ENCODE measurements at regions of chr7 and their contacts with region 1.

Region 1: GRCh38 chr7:106285051-106285854 is 470 bp upstream of the NAMPT start:
- DNase-seq: peak; percentile 96
- H3K4me3 Mint-ChIP-seq: peak overlapping the region; percentile 95
- H3K27ac Mint-ChIP-seq: peak overlapping the region; percentile 99
- H3K4me1 Mint-ChIP-seq: peaks cover 53% of the 10 kb centered on the region
- H3K27me3 Mint-ChIP-seq: peaks cover 2% of the 10 kb centered on the region

Region 2: DNA sequence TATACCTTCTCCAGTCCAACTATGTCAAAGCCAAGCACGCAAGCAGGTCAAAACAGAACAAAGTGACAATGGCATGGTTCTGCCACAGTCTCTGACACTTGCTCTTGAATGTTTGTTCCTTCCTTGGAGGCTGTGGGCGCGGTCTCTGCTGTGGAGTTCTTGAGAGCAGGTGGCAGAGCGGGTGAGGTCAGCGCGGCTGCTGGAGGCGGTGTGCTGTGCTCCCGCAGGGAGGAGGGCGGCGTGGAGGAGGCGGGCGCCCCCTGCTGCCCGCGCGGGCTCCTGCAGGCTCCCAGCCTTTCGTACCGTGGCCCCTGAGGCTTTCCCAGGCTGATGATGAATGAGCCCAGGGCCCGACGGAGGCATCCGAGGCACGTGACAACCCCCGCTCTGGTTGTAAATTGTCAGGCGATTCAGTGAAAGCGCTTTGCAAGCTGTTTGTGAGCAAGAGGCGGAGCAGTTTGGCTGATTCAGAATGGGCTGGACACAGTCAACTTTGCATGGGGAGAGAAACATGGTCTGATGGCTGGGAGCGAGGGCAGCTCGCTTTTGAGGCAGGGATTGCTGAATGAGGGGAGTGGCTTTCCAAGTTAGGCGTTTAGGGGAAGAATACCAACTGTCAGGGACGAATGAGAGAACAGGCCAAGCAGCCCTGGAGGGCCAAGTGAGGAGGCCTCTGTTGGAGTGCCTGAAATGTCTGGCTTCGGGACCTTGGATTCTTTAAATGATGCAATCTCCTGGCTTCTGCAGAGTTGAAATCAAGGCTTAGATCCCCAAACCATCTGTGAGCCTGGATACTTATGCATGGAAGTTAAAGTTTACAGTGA is 275.6 kb before region 1 on chr7:
- intact Hi-C with region 1: no loop called
- DNase-seq: peak; percentile 72
- H3K4me3 Mint-ChIP-seq: no peak overlapping the region
- H3K27ac Mint-ChIP-seq: peak overlapping the region; percentile 32
- H3K4me1 Mint-ChIP-seq: peaks cover 15% of the 10 kb centered on the region
- H3K27me3 Mint-ChIP-seq: peaks cover 33% of the 10 kb centered on the region

Region 3: DNA sequence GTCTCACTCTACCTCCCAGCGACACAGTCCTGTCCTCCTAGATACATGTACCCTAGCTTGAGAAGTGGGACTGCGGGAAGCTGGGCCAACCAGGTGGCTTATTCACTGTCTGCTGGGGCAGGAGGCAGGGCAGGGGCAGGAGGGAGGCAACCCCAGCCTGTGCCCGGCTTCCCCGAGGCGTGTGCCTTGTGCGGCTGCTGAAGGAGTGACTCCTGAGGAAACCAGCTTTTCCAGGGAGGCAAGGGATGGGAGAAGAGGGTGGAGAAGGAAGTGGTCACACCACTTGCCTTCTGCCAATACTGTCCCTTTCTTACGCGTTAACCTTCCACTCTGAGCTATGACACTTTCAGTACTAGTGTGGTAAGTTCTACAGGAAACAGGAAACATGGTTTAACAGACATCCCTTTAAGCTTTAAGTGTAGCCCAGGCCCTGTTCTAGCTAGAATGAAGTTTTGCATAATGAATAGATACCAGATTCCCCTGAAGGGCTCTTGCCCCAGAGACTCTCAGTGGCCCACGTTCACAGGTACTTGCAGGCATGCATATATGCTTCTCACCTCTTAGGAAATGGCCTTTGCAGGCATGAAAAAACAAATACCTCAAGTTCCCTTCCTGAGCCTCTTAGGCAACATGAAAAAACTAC is 213.8 kb before region 1 on chr7:
- intact Hi-C with region 1: loop called (anchors 1 kb)
- DNase-seq: peak; percentile 44
- H3K4me3 Mint-ChIP-seq: peak overlapping the region; percentile 59
- H3K27ac Mint-ChIP-seq: peak overlapping the region; percentile 93
- H3K4me1 Mint-ChIP-seq: peaks cover 42% of the 10 kb centered on the region
- H3K27me3 Mint-ChIP-seq: no peaks in the 10 kb centered on the region

Region 4: DNA sequence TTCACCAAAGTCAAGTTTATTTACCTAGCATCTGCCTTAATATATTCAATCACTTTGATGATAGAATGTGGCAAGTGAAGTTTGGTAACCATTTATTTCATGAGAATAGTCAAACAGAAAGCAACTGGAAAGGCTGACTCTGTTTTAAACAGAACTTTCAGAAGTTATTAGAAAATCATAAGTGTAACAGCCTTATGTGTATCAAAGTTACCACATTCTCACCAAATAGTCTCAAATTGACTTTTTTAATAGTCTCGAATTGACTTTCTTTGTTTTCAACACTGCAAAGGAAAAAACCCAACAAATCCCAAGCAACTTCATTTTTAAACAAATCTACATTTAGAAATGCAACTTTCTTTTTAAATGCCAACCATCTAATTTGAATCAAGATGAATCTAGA is 30.0 kb before region 1 on chr7:
- intact Hi-C with region 1: loop called (anchors 1 kb)
- DNase-seq: no peak
- H3K4me3 Mint-ChIP-seq: no peak overlapping the region
- H3K27ac Mint-ChIP-seq: peak overlapping the region; percentile 44
- H3K4me1 Mint-ChIP-seq: peaks cover 46% of the 10 kb centered on the region
- H3K27me3 Mint-ChIP-seq: no peaks in the 10 kb centered on the region

Region 5: DNA sequence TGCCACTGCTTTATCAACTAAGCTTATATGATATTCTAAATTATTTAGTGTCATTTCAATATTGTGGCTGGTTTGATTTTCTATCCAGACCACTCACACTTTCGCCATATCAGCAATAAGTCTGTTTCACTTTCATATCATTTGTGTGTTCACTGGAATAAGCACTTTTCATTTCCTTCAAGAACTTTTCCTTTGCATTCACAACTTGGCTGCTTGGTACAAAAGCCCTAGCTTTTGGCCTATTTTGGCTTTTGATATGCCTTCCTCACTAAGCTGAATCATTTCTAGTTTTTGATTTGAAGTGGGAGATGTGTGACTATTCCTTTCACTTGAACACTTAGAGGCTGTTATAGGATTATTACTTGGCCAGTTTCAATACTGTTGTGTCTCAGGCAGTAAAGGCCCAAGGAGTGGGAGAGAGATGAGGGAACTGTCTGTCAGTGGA is 120.5 kb after region 1 on chr7:
- intact Hi-C with region 1: loop called (anchors 1 kb)
- DNase-seq: no peak
- H3K4me3 Mint-ChIP-seq: no peak overlapping the region
- H3K27ac Mint-ChIP-seq: peak overlapping the region; percentile 30
- H3K4me1 Mint-ChIP-seq: peaks cover 23% of the 10 kb centered on the region
- H3K27me3 Mint-ChIP-seq: peaks cover 23% of the 10 kb centered on the region

Region 6: DNA sequence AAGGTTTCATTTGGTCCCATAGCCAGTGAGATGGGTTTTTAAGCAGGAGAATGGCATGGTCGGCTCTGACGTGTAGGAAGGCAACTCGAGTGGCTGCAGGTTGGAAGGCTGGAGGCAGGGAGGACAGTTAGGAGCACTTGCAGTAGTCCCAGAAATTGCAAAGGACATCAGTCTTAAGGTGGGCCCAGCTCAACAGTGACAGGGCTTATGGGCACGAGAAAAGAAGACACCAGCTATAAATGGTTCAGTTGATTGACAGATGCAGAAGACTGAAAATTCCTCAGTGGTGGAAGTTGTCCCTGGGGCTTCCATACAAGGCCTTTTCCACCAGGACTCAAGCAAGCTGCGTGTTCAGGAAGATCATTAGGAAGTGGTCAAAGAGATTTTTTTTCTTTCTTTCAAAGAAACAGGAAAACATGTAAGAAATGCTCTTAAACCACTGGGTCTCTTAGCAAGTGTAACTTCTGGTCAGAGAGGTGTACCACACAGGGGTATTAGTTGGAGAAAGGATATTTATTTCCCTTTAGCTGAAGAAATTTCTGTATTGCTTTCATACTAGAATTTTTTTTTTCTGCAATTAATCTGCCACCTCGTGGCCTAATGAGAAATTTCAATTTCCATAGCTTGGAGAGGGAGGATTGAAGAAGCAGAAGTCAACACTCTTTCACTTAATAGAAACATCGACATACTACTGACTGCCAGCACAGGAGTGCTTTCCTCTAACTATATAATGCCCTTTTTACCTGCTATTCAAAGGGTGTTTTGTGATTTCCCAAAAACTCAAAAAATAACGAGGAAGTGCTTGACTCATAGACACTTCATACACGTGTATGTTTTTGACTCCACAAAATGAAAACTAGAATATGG is 177.0 kb after region 1 on chr7:
- intact Hi-C with region 1: loop called (anchors 1 kb)
- DNase-seq: no peak
- H3K4me3 Mint-ChIP-seq: no peak overlapping the region
- H3K27ac Mint-ChIP-seq: no peak overlapping the region
- H3K4me1 Mint-ChIP-seq: peaks cover 30% of the 10 kb centered on the region
- H3K27me3 Mint-ChIP-seq: no peaks in the 10 kb centered on the region

Region 7: GRCh38 chr7:106717955-106718871 is 433.0 kb after region 1 on chr7:
- intact Hi-C with region 1: loop called (anchors 1 kb)
- DNase-seq: peak; percentile 37
- H3K4me3 Mint-ChIP-seq: no peak overlapping the region
- H3K27ac Mint-ChIP-seq: no peak overlapping the region
- H3K4me1 Mint-ChIP-seq: peaks cover 11% of the 10 kb centered on the region
- H3K27me3 Mint-ChIP-seq: no peaks in the 10 kb centered on the region

Region 8: GRCh38 chr7:107661081-107661864 is 1376.0 kb after region 1 on chr7:
- intact Hi-C with region 1: loop called (anchors 10 kb)
- DNase-seq: peak; percentile 55
- H3K4me3 Mint-ChIP-seq: peak overlapping the region; percentile 96
- H3K27ac Mint-ChIP-seq: peak overlapping the region; percentile 92
- H3K4me1 Mint-ChIP-seq: peaks cover 40% of the 10 kb centered on the region
- H3K27me3 Mint-ChIP-seq: peaks cover 3% of the 10 kb centered on the region

Measured in activated T-helper 1 cell treated with anti-CD3 and anti-CD28 coated beads, Interleukin-12 subunit alpha, Interleukin-12 subunit beta, Interleukin-2, Interleukin-4 antibody, amounts not matched to agents 30 ng/mL and 10 ng/mL and 1 ng/mL, durations not matched to agents 14 hours and 24 hours and 36 hours (primary cell).